Calu3 (cell line): ENCODE measurements at regions of chr12 and their contacts with region 1.

Region 1: DNA sequence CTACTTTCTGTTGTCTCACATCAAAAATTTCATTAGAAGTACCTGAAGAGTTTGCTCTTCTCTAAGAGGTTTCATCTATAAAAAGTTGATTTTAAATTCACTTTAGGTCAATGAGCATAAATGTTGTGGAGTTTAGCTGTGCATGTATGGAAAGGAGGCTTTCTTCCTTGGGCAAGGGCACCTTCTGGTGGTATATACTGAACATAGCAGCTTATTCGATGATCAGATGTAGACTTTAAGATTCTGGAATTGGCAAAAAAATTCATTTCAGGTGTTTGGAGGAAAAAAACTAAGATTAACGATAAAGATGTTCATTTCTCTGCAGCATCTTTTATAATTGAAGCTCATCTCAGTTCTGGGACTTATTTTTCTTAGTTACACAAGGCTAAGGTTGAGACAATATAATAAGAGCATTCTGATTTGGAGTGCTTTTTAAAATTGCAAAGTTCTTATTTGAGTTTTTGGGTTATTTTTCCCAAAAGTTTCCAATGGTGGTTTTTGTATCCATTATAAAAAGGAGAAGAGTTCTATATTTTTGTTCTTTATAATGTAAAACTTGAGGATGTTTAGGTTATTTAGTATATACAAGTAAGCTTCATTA is 46.8 kb downstream of the TMEM117 start:
- DNase-seq: peak; percentile 25
- H3K4me3 Mint-ChIP-seq: no peak overlapping the region
- H3K27ac Mint-ChIP-seq: no peak overlapping the region
- H3K4me1 Mint-ChIP-seq: no peaks in the 10 kb centered on the region
- H3K27me3 Mint-ChIP-seq: no peaks in the 10 kb centered on the region
- CTCF ChIP-seq: peak; percentile 46

Region 2: DNA sequence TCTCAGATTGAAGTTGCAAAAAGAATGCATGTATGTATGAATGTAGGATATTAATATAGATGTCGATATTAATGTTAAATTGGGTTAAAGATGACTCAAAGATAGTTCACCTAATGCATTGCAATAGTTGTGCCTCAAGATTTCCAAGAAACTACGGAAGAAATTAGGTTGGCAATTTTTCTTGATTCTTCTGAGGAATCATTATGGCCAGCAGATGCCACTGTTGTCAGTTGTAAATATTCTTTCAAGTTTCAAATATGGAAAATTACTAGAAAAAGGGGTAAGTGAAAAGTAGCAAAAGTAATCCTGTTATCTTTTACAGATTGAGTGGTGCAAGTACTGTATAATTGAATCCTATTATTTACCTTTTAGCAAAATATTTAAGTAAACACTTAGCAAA is 532.8 kb before region 1 on chr12:
- CTCF ChIA-PET with region 1: no interaction called
- intact Hi-C with region 1: loop called (anchors 2 kb)
- DNase-seq: no peak
- H3K4me3 Mint-ChIP-seq: no peak overlapping the region
- H3K27ac Mint-ChIP-seq: no peak overlapping the region
- H3K4me1 Mint-ChIP-seq: no peaks in the 10 kb centered on the region
- H3K27me3 Mint-ChIP-seq: no peaks in the 10 kb centered on the region
- CTCF ChIP-seq: no peak

Region 3: GRCh38 chr12:43444940-43445564 is 437.6 kb before region 1 on chr12:
- CTCF ChIA-PET with region 1: no interaction called
- intact Hi-C with region 1: loop called (anchors 5 kb)
- DNase-seq: peak; percentile 68
- H3K4me3 Mint-ChIP-seq: no peak overlapping the region
- H3K27ac Mint-ChIP-seq: no peak overlapping the region
- H3K4me1 Mint-ChIP-seq: no peaks in the 10 kb centered on the region
- H3K27me3 Mint-ChIP-seq: no peaks in the 10 kb centered on the region
- CTCF ChIP-seq: peak; percentile 48

Region 4: GRCh38 chr12:43501703-43502102 is 381.0 kb before region 1 on chr12:
- CTCF ChIA-PET with region 1: no interaction called
- intact Hi-C with region 1: loop called (anchors 1 kb)
- DNase-seq: no peak
- H3K4me3 Mint-ChIP-seq: no peak overlapping the region
- H3K27ac Mint-ChIP-seq: no peak overlapping the region
- H3K4me1 Mint-ChIP-seq: no peaks in the 10 kb centered on the region
- H3K27me3 Mint-ChIP-seq: no peaks in the 10 kb centered on the region
- CTCF ChIP-seq: no peak

Region 5: GRCh38 chr12:43776498-43776897 is 106.2 kb before region 1 on chr12:
- CTCF ChIA-PET with region 1: interaction called, 9 read pairs
- intact Hi-C with region 1: loop called (anchors 1 kb)
- DNase-seq: no peak
- H3K4me3 Mint-ChIP-seq: no peak overlapping the region
- H3K27ac Mint-ChIP-seq: no peak overlapping the region
- H3K4me1 Mint-ChIP-seq: no peaks in the 10 kb centered on the region
- H3K27me3 Mint-ChIP-seq: no peaks in the 10 kb centered on the region
- CTCF ChIP-seq: no peak

Region 6: DNA sequence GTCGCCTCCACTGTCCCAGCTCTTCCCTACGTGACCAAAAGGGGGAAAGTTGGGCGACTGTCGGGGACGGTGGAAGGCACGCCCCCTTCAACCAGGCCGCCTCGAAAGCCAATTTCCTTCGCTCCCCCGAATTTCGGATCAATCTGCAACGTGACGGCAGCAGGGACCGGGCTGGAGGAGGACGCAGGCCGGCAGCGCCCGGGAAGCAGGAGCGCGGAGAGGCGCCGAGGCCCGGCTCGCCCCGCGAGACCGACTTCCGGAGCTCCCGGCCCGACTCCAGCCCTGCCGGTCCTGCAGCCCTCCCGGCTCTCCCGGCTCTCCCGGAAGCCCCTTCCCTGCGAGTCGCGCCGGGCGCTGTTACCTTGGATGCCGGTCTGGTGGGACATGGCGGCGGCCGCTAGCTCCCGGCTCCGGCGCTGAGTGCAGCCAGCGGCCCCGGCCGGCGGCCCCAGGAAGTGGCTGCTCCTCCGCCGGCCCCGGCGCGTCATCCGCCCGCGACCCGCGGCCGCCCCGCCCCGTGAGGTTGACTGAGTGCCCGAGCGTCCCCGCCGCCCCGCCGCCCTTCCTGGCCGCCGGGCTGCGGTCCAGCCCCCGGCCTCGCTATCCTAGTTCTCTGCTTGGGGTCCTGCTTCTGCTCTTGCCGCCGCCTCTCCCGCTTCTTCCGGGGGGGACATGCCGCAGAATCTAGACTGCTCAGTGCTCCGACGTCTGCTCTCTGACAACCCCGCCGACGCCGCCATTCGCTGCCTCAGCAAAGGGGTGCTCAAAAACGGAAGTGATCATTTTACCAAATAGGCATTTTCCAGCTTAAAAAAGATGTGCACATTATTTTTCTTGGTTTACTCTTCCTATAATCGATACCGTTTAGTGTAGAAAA is 76.6 kb before region 1 on chr12 and contains the start of gene TWF1:
- CTCF ChIA-PET with region 1: interaction called, 10 read pairs
- intact Hi-C with region 1: no loop called
- DNase-seq: peak; percentile 84
- H3K4me3 Mint-ChIP-seq: peak within 1 kb of the TSS; percentile 81
- H3K27ac Mint-ChIP-seq: peak within 1 kb of the TSS; percentile 90
- H3K4me1 Mint-ChIP-seq: no peaks in the 10 kb centered on the region
- H3K27me3 Mint-ChIP-seq: no peaks in the 10 kb centered on the region
- CTCF ChIP-seq: peak; percentile 32
- total RNA-seq, gene TWF1: 67.4 and 75.8 TPM in 2 replicates